ENCODE measurements at regions of chr12 and their contacts with region 1.

Region 1: DNA sequence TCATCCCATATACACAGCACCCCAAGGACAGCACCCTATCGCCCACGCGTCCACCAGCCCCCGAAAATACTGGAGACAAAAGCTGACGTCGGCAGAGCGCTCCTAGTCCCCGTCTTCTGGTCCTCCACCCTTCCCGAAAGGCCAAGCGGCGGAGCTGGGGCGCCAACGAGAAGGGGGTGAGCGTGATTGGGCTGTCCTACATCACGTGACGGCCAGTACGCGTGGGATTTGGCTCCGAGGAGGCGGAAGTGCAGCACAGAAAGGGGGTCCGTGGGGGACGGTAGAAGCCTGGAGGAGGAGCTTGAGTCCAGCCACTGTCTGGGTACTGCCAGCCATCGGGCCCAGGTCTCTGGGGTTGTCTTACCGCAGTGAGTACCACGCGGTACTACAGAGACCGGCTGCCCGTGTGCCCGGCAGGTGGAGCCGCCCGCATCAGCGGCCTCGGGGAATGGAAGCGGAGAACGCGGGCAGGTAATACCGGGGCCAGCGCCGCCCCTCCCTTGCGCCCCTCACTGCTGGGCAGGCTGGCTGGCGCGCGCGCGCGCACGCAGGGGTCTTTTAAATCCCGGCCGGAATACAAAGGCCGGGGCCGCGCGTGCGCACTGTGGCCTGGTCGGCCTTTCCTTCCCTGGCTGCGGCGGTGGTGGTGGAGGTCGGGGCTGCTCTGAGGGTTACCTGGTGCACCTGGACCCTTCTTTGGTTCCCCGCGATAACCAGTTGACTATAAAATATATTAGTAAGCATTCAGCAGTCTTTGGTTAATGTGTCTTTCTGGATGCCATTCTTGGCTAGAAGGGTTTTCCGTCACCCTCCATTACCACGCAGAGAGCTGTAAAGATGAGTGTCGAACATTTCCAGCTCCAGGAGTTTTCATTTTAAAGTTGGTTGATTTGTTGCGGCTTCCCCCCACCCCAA is at the start of gene TDG:
- DNase-seq: peak; percentile 99
- H3K4me3 ChIP-seq: peak within 1 kb of the TSS; percentile 94 to 96
- H3K27ac ChIP-seq: peak within 1 kb of the TSS; percentile 97 to 98
- H3K4me1 ChIP-seq: peaks cover 0 to 56% (median 40%) of the 10 kb centered on the region in 4 donors
- H3K27me3 ChIP-seq: no peaks in the 10 kb centered on the region
- CTCF ChIP-seq: peak in 1 of 2 experiments; percentile 9

Region 2: DNA sequence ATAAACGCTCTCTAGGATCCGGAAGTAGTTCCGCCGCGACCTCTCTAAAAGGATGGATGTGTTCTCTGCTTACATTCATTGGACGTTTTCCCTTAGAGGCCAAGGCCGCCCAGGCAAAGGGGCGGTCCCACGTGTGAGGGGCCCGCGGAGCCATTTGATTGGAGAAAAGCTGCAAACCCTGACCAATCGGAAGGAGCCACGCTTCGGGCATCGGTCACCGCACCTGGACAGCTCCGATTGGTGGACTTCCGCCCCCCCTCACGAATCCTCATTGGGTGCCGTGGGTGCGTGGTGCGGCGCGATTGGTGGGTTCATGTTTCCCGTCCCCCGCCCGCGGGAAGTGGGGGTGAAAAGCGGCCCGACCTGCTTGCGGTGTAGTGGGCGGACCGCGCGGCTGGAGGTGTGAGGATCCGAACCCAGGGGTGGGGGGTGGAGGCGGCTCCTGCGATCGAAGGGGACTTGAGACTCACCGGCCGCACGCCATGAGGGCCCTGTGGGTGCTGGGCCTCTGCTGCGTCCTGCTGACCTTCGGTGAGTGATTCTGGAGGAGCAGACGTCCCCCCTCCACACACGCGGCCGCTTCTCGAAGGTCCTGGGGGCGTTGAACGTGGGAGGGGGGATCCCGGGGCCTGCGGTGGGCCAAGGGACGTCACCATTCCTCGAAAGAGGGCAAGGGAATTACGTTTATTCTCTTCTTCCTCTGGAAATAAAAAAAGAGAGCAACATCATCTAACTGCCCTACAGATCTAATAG is 35.6 kb before region 1 on chr12 and contains the start of gene HSP90B1:
- intact Hi-C with region 1: no loop called
- DNase-seq: peak; percentile 99 to 100
- H3K4me3 ChIP-seq: peak within 1 kb of the TSS; percentile 79 to 89
- H3K27ac ChIP-seq: peak within 1 kb of the TSS; percentile 91 to 96
- H3K4me1 ChIP-seq: peaks cover 0 to 51% (median 33%) of the 10 kb centered on the region in 4 donors
- H3K27me3 ChIP-seq: no peaks in the 10 kb centered on the region
- CTCF ChIP-seq: peak in 1 of 2 experiments; percentile 40

Region 3: GRCh38 chr12:104064031-104064822 is 98.4 kb after region 1 on chr12 and contains the start of gene HCFC2:
- intact Hi-C with region 1: loop called (anchors 10 kb)
- DNase-seq: peak; percentile 90 to 95
- H3K4me3 ChIP-seq: peak within 1 kb of the TSS; percentile 80 to 97
- H3K27ac ChIP-seq: peak within 1 kb of the TSS; percentile 88 to 89
- H3K4me1 ChIP-seq: peaks cover 0 to 28% (median 18%) of the 10 kb centered on the region in 4 donors
- H3K27me3 ChIP-seq: no peaks in the 10 kb centered on the region
- CTCF ChIP-seq: no peak